ENCODE measurements at regions of chr5 and their contacts with region 1.

Region 1: DNA sequence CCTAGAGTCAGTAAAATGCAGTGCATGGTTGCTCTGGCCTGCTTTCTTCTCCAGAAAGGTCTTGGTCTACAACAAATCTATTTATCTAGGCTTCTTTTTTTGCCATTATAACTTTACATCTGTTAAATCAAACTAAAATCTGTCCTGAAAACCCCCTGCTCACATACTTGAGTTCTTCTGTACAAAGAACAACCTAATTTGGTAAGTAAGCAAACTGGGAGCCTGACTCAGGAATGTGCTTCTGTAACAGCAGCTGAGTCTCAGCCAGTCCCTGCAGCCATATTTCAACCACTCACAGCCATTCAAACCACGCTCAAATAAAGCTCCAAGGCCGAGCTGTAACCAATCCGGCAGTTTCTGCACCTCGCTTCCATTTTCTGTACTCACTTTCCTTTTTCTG is 95.8 kb downstream of the PLPP1 start:
- DNase-seq: no peak
- ATAC-seq: peak in 3 of 4 donors; percentile 22 to 41 (median 28)
- H3K4me3 ChIP-seq: no peak overlapping the region
- H3K27ac ChIP-seq: peak overlapping the region; percentile 45 to 89 (median 82)
- H3K4me1 ChIP-seq: peaks cover 2 to 65% (median 48%) of the 10 kb centered on the region in 12 donors
- H3K27me3 ChIP-seq: no peaks in the 10 kb centered on the region
- CTCF ChIP-seq: no peak
- POLR2A ChIP-seq: no peak

Region 2: GRCh38 chr5:55850839-55851674 is 412.0 kb after region 1 on chr5 and contains the start of gene IL31RA:
- intact Hi-C with region 1: loop called in 1 of 10 experiments (anchors 5 kb)
- DNase-seq: no peak
- ATAC-seq: peak in 2 of 4 donors; percentile 45 to 54
- H3K4me3 ChIP-seq: no peak within 1 kb of the TSS
- H3K27ac ChIP-seq: no peak within 1 kb of the TSS
- H3K4me1 ChIP-seq: peaks cover 0 to 37% (median 3%) of the 10 kb centered on the region in 12 donors
- H3K27me3 ChIP-seq: no peaks in the 10 kb centered on the region
- CTCF ChIP-seq: no peak
- POLR2A ChIP-seq: no peak
- total RNA-seq, gene IL31RA: 0.21 to 2.2 (median 0.54) TPM in 5 of 9 donors, not detected in the others